Activated CD4-positive, alpha-beta T cell treated with anti-CD3 and anti-CD28 coated beads for 36 hours (primary cell): ENCODE measurements at regions of chr22 and their contacts with region 1.

Region 1: DNA sequence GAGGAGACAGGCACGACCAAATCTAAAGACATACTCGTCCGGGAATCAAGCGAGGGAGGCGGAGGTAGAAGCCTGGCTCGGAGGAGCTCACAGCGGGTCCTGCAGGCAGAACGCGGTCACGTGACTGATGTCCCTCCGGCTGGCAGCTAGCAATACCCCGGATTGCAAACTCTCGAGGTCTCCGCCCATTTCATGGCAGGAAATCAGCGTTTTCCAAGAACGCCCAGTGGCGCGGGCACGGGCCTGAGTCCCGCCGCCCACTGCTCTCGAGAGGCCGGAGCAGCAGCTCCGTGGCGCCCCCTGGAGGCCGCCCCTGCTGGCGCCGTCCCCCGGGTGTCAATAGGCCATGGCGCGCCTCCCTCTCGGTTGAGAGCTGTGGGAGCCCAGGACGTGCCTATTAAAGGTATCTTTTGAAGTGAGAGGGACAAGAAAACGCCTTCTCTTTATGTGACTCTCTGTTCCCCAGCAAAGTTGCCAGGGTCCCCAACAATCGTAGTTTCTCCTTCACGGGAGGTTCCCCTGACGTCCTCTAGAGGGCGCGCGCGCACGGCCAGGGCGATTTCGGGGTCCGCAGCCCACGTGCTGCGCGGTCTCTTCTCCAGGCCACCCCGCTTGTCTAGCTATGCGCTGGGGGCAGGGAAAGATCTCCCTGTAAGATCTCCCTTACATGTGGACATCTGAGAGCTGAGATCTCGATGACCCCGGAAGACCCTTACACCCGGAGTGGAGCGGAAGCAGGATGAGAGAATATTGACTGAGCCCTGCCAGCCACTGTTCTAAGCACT is 37.3 kb upstream of the RBFOX2 start:
- DNase-seq: peak; percentile 85
- ATAC-seq: peak; percentile 85
- H3K4me3 Mint-ChIP-seq: peak overlapping the region; percentile 69
- H3K27ac Mint-ChIP-seq: peak overlapping the region; percentile 91
- H3K4me1 Mint-ChIP-seq: peaks cover 5% of the 10 kb centered on the region
- H3K27me3 Mint-ChIP-seq: no peaks in the 10 kb centered on the region

Region 2: DNA sequence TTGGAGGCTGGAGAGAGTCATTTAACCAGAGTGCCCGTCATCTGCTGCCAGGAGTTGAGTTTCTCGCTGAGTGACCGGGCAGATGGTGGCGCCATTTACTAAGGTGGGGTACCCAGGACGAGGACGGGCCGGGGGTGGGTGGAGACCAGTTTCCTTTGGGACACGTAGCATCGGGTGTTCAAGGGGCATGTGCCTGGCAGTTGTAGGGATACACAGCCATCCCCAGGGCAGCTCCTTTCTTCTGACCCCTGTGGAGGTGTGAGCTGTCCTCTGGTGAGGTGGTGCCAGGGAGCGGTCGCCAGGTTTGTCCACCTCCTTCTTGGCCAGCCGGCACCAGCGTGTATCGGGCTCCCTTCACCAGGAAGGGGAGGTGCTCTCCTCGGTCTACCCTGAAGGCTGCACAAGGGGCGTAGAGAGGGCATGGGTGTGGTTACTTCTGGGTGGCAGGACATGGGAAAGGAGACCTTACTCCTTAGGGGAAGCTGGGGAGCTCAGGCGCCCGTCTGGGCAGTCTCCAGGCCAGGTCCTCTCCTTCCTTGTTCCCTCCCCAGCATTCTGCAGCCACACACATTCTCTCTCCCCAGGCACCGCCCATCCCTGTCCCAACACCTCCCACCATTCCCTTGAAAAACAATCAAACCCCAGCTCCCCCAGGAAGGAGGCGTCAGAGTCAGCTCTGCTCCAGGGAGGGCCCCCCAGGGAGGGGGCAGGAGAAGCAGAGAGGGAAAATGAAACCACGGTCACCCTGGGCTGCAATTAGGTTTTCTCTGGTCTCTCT is 438.5 kb before region 1 on chr22:
- CTCF ChIA-PET with region 1: interaction called, 11 read pairs
- POLR2A ChIA-PET with region 1: no interaction called
- intact Hi-C with region 1: loop called in 1 of 2 experiments (anchors 5 kb)
- DNase-seq: peak; percentile 83
- ATAC-seq: peak; percentile 72
- H3K4me3 Mint-ChIP-seq: peak overlapping the region; percentile 68
- H3K27ac Mint-ChIP-seq: peak overlapping the region; percentile 33
- H3K4me1 Mint-ChIP-seq: peaks cover 26% of the 10 kb centered on the region
- H3K27me3 Mint-ChIP-seq: no peaks in the 10 kb centered on the region

Region 3: GRCh38 chr22:35966314-35967045 is 99.5 kb before region 1 on chr22:
- CTCF ChIA-PET with region 1: interaction called, 12 read pairs
- POLR2A ChIA-PET with region 1: no interaction called
- intact Hi-C with region 1: no loop called
- DNase-seq: no peak
- ATAC-seq: no peak
- H3K4me3 Mint-ChIP-seq: no peak overlapping the region
- H3K27ac Mint-ChIP-seq: no peak overlapping the region
- H3K4me1 Mint-ChIP-seq: no peaks in the 10 kb centered on the region
- H3K27me3 Mint-ChIP-seq: no peaks in the 10 kb centered on the region

Region 4: GRCh38 chr22:36028646-36029405 is 37.1 kb before region 1 on chr22 and contains the start of gene RBFOX2:
- CTCF ChIA-PET with region 1: interaction called, 50 read pairs
- POLR2A ChIA-PET with region 1: interaction called, 3 read pairs
- intact Hi-C with region 1: loop called (anchors 1 to 2 kb)
- DNase-seq: peak; percentile 87
- ATAC-seq: peak; percentile 83
- H3K4me3 Mint-ChIP-seq: peak within 1 kb of the TSS; percentile 80
- H3K27ac Mint-ChIP-seq: peak within 1 kb of the TSS; percentile 72
- H3K4me1 Mint-ChIP-seq: peaks cover 20% of the 10 kb centered on the region
- H3K27me3 Mint-ChIP-seq: peaks cover 2% of the 10 kb centered on the region
- total RNA-seq, gene RBFOX2: 6.9 to 7.7 TPM

Region 5: DNA sequence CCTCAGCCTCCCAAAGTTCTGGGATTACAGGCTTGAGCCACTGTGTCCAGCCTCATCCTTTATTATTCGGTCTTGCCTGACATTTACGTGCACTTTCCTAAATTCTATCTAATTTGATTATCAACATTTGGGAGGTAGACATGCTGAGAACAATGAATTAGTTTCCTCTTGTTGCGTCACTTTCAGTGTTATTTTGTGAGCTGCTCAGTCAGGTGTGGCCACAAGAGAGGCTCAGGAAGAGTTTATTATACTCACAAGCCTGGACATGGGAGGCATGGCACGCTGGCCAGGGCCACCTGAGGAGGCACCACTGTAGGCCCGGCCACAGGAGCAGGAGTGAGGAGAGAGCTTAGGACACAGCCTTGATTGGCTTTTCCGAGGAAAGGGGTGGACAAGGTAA is 22.3 kb after region 1 on chr22:
- CTCF ChIA-PET with region 1: interaction called, 41 read pairs
- POLR2A ChIA-PET with region 1: no interaction called
- intact Hi-C with region 1: no loop called
- DNase-seq: no peak
- ATAC-seq: no peak
- H3K4me3 Mint-ChIP-seq: no peak overlapping the region
- H3K27ac Mint-ChIP-seq: no peak overlapping the region
- H3K4me1 Mint-ChIP-seq: peaks cover 3% of the 10 kb centered on the region
- H3K27me3 Mint-ChIP-seq: no peaks in the 10 kb centered on the region